HEK293T (cell line): ENCODE measurements at regions of chr17 and their contacts with region 1.

Region 1: GRCh38 chr17:29148790-29149430 is 31.3 kb downstream of the MYO18A start:
- DNase-seq: peak; percentile 87

Region 2: DNA sequence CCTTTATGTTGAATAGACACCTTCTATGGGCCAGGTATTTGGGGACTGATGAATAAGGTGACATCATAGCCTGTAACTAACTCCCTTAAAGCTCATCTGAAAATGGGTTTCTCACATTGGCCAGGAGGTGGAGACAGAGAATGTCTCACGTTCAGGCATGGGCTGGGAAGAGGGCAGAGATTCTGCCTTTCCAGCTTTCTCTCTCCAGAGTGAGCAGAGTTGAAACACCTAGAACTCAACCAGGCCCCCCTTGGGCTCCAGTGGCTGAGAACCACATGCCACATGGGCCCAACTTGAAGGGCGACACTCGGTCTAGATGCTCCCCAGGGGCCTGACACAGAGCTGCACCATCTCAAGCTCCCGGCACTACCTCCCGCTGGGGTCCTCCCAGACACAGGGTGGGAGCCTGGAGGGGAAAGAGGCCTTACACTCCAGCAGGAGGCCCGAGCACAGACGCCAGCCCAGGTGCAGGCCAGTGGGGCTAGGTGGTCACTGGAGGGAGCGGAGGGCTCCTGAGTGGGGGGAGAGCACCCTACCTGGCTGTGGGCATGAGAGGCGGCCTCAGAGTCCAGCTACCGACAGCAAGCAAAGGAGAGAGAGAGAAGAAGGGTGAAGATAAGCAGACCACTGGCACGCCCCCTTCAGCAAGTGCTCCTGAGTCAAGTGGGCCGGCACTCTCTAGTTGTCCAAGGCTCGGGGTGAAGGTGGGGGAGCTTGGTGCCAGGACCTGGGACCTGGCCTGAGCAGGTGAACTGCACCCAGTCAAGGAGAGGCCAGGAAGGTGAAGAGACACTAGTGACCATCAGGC is 24.6 kb before region 1 on chr17:
- CTCF ChIA-PET with region 1: interaction called, 20 read pairs
- POLR2A ChIA-PET with region 1: interaction called, 7 read pairs
- DNase-seq: peak; percentile 62

Region 3: DNA sequence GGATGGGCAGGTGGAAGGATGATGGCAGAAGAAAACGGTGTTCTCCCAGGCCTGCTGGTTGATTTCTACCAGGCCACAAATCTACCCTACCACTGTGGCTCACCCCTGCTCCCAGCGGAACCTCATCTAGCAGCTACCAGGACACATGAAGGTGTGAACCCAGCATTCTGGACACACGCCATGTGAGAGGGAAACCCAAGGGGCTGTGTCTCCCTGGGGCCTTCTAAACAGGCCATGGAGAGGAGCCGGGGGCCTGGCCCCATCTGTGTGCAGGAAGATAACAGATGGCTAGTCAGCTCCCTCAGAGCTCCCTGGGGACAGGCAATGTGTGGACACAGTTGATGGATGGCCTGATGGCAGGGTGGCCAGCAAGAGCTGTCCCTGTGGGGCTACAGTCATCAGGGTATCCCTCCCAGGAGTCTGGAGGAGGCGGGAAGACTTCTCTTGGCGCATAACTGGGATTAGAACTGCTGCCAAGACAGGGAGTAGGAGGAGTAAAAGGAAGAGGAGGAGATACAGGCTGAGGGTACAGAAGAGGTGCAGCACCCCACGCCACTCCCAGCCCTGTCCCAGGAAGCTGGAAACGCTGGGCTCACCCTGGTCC is 13.9 kb after region 1 on chr17:
- CTCF ChIA-PET with region 1: interaction called, 11 read pairs
- POLR2A ChIA-PET with region 1: interaction called, 6 read pairs
- DNase-seq: no peak

Region 4: GRCh38 chr17:29180034-29180787 is 31.3 kb after region 1 on chr17 and contains the start of gene MYO18A:
- CTCF ChIA-PET with region 1: interaction called, 25 read pairs
- POLR2A ChIA-PET with region 1: interaction called, 60 read pairs
- DNase-seq: peak; percentile 82

Region 5: DNA sequence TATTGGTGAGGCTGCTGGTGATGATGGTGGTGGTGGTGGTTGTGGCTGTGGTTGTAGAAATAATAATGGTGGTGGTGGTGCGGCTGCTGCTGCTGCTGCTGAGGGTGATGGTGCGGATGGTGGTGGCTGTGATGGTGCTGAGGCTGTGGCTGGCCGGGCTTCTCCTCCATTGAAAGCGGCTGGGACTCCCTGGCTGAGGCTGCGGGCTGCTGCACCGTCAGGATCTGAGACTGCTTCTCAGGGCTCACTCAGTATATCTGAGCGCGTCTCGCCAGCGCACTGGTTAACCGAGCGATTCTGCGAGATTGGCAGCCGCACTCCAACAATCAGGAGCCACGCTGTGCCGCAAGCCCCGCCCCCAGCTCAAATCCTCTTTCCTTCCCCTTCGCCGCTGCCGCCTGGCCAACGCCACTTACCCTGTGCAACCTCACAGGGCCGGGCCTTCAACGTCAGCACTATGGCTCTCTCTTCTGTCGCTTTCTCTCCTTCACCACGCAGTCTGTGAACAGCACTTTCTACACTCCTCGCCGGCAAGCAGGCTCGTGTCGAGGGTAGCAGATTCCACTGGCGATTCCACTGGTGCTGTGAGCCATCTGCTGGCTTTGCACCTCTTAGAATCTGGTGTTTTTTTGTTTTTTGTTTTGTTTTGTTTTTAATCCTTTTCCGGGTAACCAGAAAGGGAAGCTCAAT is 145.1 kb after region 1 on chr17 and contains the start of gene NUFIP2:
- CTCF ChIA-PET with region 1: interaction called, 4 read pairs
- POLR2A ChIA-PET with region 1: interaction called, 10 read pairs
- DNase-seq: peak; percentile 92